ENCODE measurements at regions of chr1 and their contacts with region 1.

Region 1: GRCh38 chr1:201792534-201793305 is 36.2 kb upstream of the IPO9 start:
- DNase-seq: peak; percentile 86 to 90
- ATAC-seq: peak; percentile 93 to 97
- H3K4me3 ChIP-seq: no peak overlapping the region
- H3K27ac ChIP-seq: peak overlapping the region in 1 of 2 experiments; percentile 61; a peak in 3 of 6 replicates
- H3K4me1 ChIP-seq: peaks cover 14% of the 10 kb centered on the region; the same call in 2 of the 3 replicates
- CTCF ChIP-seq: peak; percentile 97
- EP300 ChIP-seq: no peak
- POLR2A ChIP-seq: no peak
- RAD21 ChIP-seq: peak; percentile 99 to 100

Region 2: GRCh38 chr1:201551877-201552731 is 240.6 kb before region 1 on chr1:
- CTCF ChIA-PET with region 1: interaction called, 227 read pairs
- POLR2A ChIA-PET with region 1: no interaction called
- DNase-seq: peak; percentile 57 to 69
- ATAC-seq: peak; percentile 75 to 78
- H3K4me3 ChIP-seq: no peak overlapping the region
- H3K27ac ChIP-seq: peak overlapping the region; percentile 59 to 86
- H3K4me1 ChIP-seq: peaks cover 11% of the 10 kb centered on the region
- CTCF ChIP-seq: no peak
- EP300 ChIP-seq: no peak
- POLR2A ChIP-seq: no peak
- RAD21 ChIP-seq: no peak

Region 3: DNA sequence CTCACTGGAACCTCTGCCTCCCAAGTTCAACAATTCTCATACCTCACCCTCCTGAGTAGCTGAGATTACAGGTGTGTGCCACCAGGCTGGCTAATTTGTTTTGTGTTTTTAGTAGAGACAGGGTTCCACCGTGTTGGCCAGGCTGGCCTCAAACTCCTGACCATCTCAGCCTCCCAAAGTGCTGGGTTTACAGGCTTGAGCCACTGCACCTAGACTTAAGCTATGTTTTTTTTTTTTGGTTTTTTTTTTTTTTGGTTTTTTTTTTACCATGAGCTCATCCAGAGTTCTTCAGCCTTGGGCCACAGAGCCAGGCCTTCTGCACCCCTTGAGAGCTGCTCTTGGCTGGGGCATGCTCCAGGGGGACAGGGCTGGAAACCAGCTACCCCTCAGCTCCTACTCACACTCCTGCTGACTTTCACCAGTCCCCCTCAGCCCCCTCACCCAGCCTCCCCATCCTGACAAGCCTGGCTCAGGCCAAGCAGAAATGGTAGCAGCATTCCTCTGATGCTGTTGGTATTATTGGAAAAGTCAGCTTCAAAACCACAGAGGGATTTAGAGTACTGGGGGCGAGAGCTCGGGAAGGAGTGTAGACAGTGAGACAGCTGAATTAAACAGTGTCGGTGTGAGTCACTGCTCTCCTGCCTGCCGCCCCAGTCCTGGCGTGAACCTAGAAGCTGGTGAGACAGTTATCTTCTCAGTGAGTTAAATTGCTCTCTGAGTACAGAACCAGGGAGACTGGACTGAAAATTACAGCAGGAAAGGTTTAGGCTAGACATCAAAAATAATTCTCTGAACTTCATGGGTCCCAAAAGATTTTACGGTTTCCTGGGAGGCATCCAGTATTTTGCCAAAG is 190.1 kb before region 1 on chr1:
- CTCF ChIA-PET with region 1: interaction called, 13 read pairs
- POLR2A ChIA-PET with region 1: no interaction called
- DNase-seq: peak; percentile 64 to 80
- ATAC-seq: peak; percentile 80 to 89
- H3K4me3 ChIP-seq: no peak overlapping the region
- H3K27ac ChIP-seq: peak overlapping the region; percentile 89 to 90
- H3K4me1 ChIP-seq: peaks cover 85% of the 10 kb centered on the region
- CTCF ChIP-seq: no peak
- EP300 ChIP-seq: peak; percentile 53 to 76; a peak in 3 of 5 replicates
- POLR2A ChIP-seq: no peak
- RAD21 ChIP-seq: 0 out of 5 replicates have a peak, but pooled peaks have one; percentile 4 to 19

Region 4: DNA sequence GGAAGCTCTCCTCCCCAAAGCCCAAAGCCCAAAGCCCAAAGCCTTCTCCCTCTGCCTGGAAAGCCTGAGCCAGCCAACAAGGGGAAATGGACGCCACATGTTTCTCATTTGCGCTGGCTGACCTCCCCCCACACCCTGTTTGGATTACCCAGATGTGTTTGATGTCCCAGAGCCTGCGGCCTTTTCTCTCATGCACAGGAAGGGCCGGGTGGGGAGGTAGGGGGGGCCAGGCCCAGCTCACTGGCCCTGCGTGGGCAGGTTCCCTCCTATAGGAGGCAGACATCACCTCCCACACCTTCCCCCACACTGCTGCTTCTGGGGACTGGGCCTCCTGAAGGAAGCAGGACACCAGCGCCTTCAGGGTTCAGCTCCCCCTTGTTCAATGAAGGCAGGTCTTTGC is 137.5 kb before region 1 on chr1:
- CTCF ChIA-PET with region 1: interaction called, 12 read pairs
- POLR2A ChIA-PET with region 1: no interaction called
- DNase-seq: no peak
- ATAC-seq: peak in 1 of 2 experiments; percentile 14; a peak in 1 of 6 replicates
- H3K4me3 ChIP-seq: no peak overlapping the region
- H3K27ac ChIP-seq: no peak overlapping the region
- H3K4me1 ChIP-seq: peaks cover 19% of the 10 kb centered on the region
- CTCF ChIP-seq: no peak
- EP300 ChIP-seq: no peak
- POLR2A ChIP-seq: no peak
- RAD21 ChIP-seq: no peak

Region 5: DNA sequence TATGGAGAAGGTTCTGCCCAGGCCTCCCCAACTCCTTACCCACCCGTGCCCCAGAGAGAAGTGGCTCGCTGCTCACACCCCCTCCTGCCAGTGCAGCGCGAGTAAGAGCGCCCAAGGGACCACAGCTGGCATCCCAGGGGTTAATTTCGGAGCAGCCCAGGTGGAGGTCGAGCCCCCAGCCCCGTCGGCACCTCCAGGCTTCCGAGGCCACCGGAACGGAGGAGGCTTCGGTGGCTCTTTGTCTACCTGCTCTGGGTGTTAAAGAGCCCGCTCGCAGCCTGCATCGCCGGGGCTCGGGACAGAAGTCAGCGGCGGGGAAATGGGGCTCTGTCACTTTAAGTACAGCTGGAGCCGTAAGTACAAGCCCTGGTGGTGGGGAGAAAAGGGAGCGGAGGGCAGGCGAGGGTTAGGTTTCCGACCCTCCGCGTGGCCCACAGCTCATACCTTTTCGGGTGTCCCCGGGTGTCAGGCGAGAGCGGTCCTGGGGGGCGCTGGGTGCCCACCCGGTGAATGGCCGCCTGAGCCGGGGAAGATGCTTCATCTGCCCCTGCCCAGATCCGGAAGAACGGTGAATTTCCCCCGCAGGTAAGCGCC is 53.1 kb before region 1 on chr1:
- CTCF ChIA-PET with region 1: interaction called, 47 read pairs
- POLR2A ChIA-PET with region 1: no interaction called
- DNase-seq: no peak
- ATAC-seq: peak in 1 of 2 experiments; percentile 65; a peak in 3 of 6 replicates
- H3K4me3 ChIP-seq: no peak overlapping the region
- H3K27ac ChIP-seq: peak overlapping the region in 1 of 2 experiments; percentile 10; a peak in 1 of 6 replicates
- H3K4me1 ChIP-seq: peaks cover 6% of the 10 kb centered on the region; the same call in 1 of the 3 replicates
- CTCF ChIP-seq: no peak
- EP300 ChIP-seq: no peak
- POLR2A ChIP-seq: no peak
- RAD21 ChIP-seq: no peak

Region 6: GRCh38 chr1:201774224-201774982 is 18.3 kb before region 1 on chr1:
- CTCF ChIA-PET with region 1: interaction called, 25 read pairs
- POLR2A ChIA-PET with region 1: no interaction called
- DNase-seq: no peak
- ATAC-seq: no peak
- H3K4me3 ChIP-seq: no peak overlapping the region
- H3K27ac ChIP-seq: no peak overlapping the region
- H3K4me1 ChIP-seq: peaks cover 6% of the 10 kb centered on the region; the same call in 1 of the 3 replicates
- CTCF ChIP-seq: no peak
- EP300 ChIP-seq: no peak
- POLR2A ChIP-seq: no peak
- RAD21 ChIP-seq: no peak

Measured in A549 (cell line).